HCT116 (cell line): ENCODE measurements at regions of chr12 and their contacts with region 1.

Region 1: GRCh38 chr12:14995583-14996425 is 23.0 kb downstream of the PDE6H start:
- DNase-seq: peak; percentile 63
- ATAC-seq: peak; percentile 34; the same call in 1 of the 2 replicates
- H3K4me3 ChIP-seq: no peak overlapping the region
- H3K27ac ChIP-seq: no peak overlapping the region
- H3K4me1 ChIP-seq: no peaks in the 10 kb centered on the region
- H3K27me3 ChIP-seq: peaks cover 6% of the 10 kb centered on the region
- CTCF ChIP-seq: peak; percentile 37 to 76 (median 71); a peak in 5 of 6 replicates
- POLR2A ChIP-seq: no peak
- RAD21 ChIP-seq: peak; percentile 81

Region 2: DNA sequence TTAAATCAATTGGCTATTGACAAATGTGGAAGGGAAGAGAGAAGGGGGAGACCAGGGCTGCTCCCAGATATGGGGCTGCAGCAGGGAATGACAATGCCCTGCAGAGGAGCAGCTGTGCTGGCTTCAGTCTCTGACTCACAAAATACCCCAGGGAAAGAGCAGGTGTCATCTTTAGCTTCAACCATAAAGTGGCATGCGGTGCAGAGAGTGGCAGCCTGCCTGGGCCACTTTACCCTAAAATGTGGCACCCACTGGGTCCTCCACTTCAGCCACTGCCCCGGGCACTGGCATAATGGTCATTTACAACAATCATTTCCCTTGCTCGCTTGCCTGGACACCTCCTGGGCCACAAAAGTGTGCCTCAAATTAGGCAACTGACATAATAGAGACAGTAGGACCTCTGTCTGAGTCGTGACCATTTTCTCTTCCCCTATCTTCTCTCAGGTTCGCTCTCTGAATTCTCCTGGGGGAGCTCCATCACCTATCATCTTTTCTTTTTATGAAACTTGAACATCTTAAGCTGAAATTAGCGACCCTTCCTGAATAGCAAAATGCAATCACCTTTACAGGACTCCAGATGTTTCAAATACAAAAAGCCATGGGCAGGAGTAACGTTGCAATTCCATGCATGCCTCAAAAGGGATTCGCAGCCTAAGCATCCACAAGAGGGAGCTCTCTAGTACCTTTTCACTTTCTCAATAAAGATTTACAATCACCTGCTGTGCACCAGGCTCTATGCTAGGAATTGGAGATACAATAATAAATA is 810.2 kb before region 1 on chr12:
- CTCF ChIA-PET with region 1: no interaction called
- POLR2A ChIA-PET with region 1: no interaction called
- RAD21 ChIA-PET with region 1: no interaction called
- intact Hi-C with region 1: loop called (anchors 10 kb)
- DNase-seq: peak; percentile 39
- ATAC-seq: peak; percentile 88
- H3K4me3 ChIP-seq: no peak overlapping the region
- H3K27ac ChIP-seq: no peak overlapping the region
- H3K4me1 ChIP-seq: no peaks in the 10 kb centered on the region
- H3K27me3 ChIP-seq: no peaks in the 10 kb centered on the region
- CTCF ChIP-seq: peak; percentile 64 to 78 (median 75); a peak in 5 of 6 replicates
- POLR2A ChIP-seq: no peak
- RAD21 ChIP-seq: peak; percentile 83

Region 3: GRCh38 chr12:14629832-14630710 is 365.7 kb before region 1 on chr12:
- CTCF ChIA-PET with region 1: no interaction called
- POLR2A ChIA-PET with region 1: no interaction called
- RAD21 ChIA-PET with region 1: no interaction called
- intact Hi-C with region 1: loop called (anchors 1 kb)
- DNase-seq: peak; percentile 67
- ATAC-seq: peak; percentile 100
- H3K4me3 ChIP-seq: no peak overlapping the region
- H3K27ac ChIP-seq: no peak overlapping the region
- H3K4me1 ChIP-seq: no peaks in the 10 kb centered on the region
- H3K27me3 ChIP-seq: no peaks in the 10 kb centered on the region
- CTCF ChIP-seq: peak; percentile 84 to 99 (median 95)
- POLR2A ChIP-seq: no peak
- RAD21 ChIP-seq: peak; percentile 93

Region 4: DNA sequence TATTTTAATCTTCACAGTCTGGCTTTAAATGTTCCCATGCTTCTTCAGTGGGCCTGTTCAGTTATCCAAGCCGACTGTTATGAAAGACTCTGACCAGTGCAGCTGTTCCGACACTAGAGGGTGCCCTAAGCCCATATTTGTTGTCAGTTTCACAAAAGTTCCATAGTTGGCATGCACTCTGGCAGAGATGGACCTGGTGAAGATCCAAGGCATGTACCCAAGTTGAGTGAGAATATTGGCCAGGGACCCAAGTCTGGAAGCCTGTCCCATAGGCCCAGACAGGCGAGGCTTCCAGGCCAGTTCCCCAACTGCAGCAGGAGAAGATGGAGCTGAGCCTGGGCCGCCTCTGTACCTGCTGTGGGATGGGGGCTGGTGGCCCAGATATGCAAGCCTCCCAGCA is 272.0 kb before region 1 on chr12:
- CTCF ChIA-PET with region 1: interaction called, 3 read pairs
- POLR2A ChIA-PET with region 1: no interaction called
- RAD21 ChIA-PET with region 1: no interaction called
- intact Hi-C with region 1: loop called (anchors 1 kb)
- DNase-seq: peak; percentile 28
- ATAC-seq: peak; percentile 79
- H3K4me3 ChIP-seq: no peak overlapping the region
- H3K27ac ChIP-seq: no peak overlapping the region
- H3K4me1 ChIP-seq: no peaks in the 10 kb centered on the region
- H3K27me3 ChIP-seq: no peaks in the 10 kb centered on the region
- CTCF ChIP-seq: peak in 2 of 3 experiments; percentile 75 to 76; a peak in 4 of 6 replicates
- POLR2A ChIP-seq: no peak
- RAD21 ChIP-seq: peak; percentile 66

Region 5: GRCh38 chr12:14810953-14811483 is 184.8 kb before region 1 on chr12:
- CTCF ChIA-PET with region 1: interaction called, 16 read pairs
- POLR2A ChIA-PET with region 1: no interaction called
- RAD21 ChIA-PET with region 1: interaction called, 3 to 6 read pairs
- intact Hi-C with region 1: loop called (anchors 1 kb)
- DNase-seq: no peak
- ATAC-seq: peak; percentile 86
- H3K4me3 ChIP-seq: no peak overlapping the region
- H3K27ac ChIP-seq: no peak overlapping the region
- H3K4me1 ChIP-seq: no peaks in the 10 kb centered on the region
- H3K27me3 ChIP-seq: no peaks in the 10 kb centered on the region
- CTCF ChIP-seq: peak; percentile 42 to 59 (median 54); a peak in 5 of 6 replicates
- POLR2A ChIP-seq: no peak
- RAD21 ChIP-seq: peak; percentile 65

Region 6: GRCh38 chr12:14845350-14845750 is 150.5 kb before region 1 on chr12:
- CTCF ChIA-PET with region 1: interaction called, 24 read pairs
- POLR2A ChIA-PET with region 1: no interaction called
- RAD21 ChIA-PET with region 1: interaction called in 1 of 2 experiments, 3 read pairs
- intact Hi-C with region 1: loop called (anchors 1 kb)
- DNase-seq: peak; percentile 37
- ATAC-seq: peak; percentile 87
- H3K4me3 ChIP-seq: no peak overlapping the region
- H3K27ac ChIP-seq: no peak overlapping the region
- H3K4me1 ChIP-seq: peaks cover 0 to 10% of the 10 kb centered on the region in 2 experiments; a peak in 2 of 4 replicates
- H3K27me3 ChIP-seq: no peaks in the 10 kb centered on the region
- CTCF ChIP-seq: peak; percentile 67 to 86 (median 84)
- POLR2A ChIP-seq: no peak
- RAD21 ChIP-seq: peak; percentile 87

Region 7: GRCh38 chr12:14937689-14938088 is 58.1 kb before region 1 on chr12:
- CTCF ChIA-PET with region 1: interaction called, 7 read pairs
- POLR2A ChIA-PET with region 1: no interaction called
- RAD21 ChIA-PET with region 1: no interaction called
- intact Hi-C with region 1: loop called (anchors 2 kb)
- DNase-seq: peak; percentile 19
- ATAC-seq: peak; percentile 88
- H3K4me3 ChIP-seq: no peak overlapping the region
- H3K27ac ChIP-seq: no peak overlapping the region
- H3K4me1 ChIP-seq: peaks cover 0 to under 1% of the 10 kb centered on the region in 2 experiments; a peak in 1 of 4 replicates
- H3K27me3 ChIP-seq: no peaks in the 10 kb centered on the region
- CTCF ChIP-seq: peak in 2 of 3 experiments; percentile 48 to 49; a peak in 4 of 6 replicates
- POLR2A ChIP-seq: no peak
- RAD21 ChIP-seq: peak; percentile 20; the same call in 1 of the 2 replicates